Activated naive CD4-positive, alpha-beta T cell treated with anti-CD3 and anti-CD28 coated beads for 36 hours (primary cell): ENCODE measurements at regions of chr11 and their contacts with region 1.

Region 1: GRCh38 chr11:94786264-94787126 is 18.3 kb downstream of the AMOTL1 start:
- DNase-seq: no peak
- H3K4me3 Mint-ChIP-seq: no peak overlapping the region
- H3K27ac Mint-ChIP-seq: no peak overlapping the region
- H3K4me1 Mint-ChIP-seq: no peaks in the 10 kb centered on the region
- H3K27me3 Mint-ChIP-seq: no peaks in the 10 kb centered on the region

Region 2: DNA sequence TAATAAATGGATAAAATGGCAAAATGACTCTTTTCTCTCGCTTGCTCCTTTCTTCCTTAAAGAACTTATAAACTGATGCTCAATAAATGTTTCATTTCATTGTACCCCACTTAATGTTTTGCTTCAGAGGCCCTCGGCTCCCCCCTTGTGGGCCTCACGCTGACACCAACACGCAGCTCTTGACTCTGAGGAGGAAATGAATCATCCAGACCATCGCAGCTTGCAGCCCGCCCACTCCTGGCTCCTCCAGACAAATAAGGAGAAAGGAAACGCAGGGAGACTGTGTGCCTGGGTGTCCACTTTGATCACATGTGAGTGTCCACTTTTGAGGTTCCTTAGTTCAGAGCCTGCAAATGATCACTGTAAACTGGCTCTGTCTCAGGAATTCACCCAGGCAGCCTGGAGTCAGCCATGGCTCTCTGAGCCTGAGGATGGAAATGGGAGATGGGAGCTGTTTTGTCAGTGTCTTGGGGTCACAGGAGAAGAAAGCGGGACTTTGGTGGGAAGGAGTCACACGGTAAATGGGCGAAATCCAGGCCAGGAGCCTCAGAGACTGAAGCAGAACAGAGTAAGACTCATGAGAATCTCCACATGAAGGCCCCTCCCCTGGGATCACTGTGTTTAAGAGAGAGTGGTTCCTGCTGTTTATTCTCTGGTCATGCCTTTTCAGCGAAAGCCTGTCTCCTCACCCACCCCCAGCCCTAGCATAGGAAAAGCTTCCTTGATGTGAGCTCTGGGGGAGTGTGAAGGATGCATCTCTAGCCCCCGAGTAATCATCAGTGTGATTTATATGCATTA is 90.3 kb after region 1 on chr11:
- CTCF ChIA-PET with region 1: interaction called, 5 read pairs
- intact Hi-C with region 1: loop called (anchors 1 kb)
- DNase-seq: peak; percentile 86
- H3K4me3 Mint-ChIP-seq: no peak overlapping the region
- H3K27ac Mint-ChIP-seq: peak overlapping the region; percentile 59
- H3K4me1 Mint-ChIP-seq: peaks cover 23% of the 10 kb centered on the region
- H3K27me3 Mint-ChIP-seq: no peaks in the 10 kb centered on the region

Region 3: DNA sequence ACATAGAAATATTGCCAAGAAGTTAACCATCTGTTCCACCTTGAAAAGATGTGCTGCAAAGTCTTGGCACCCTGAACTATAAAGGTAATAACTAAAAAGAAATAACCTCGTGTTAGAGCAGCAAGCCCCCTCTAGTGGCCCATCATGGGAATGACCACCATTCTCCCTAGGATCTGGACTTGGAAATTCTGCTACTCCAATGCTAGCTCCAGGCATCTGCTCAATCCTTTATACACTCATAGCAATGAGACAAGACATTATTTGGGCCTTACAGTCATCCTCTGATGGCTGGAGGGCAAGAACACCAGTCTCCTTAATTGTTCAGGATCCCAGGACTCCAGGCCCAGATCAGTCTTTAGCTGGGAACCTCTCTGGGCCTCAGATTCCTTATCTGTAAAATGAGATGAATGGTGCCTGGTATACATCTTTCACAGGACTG is 110.9 kb after region 1 on chr11:
- CTCF ChIA-PET with region 1: interaction called, 30 read pairs
- intact Hi-C with region 1: loop called (anchors 1 kb)
- DNase-seq: peak; percentile 62
- H3K4me3 Mint-ChIP-seq: no peak overlapping the region
- H3K27ac Mint-ChIP-seq: no peak overlapping the region
- H3K4me1 Mint-ChIP-seq: no peaks in the 10 kb centered on the region
- H3K27me3 Mint-ChIP-seq: no peaks in the 10 kb centered on the region

Region 4: GRCh38 chr11:96324960-96325359 is 1538.5 kb after region 1 on chr11:
- CTCF ChIA-PET with region 1: no interaction called
- intact Hi-C with region 1: no loop called
- DNase-seq: no peak
- H3K4me3 Mint-ChIP-seq: no peak overlapping the region
- H3K27ac Mint-ChIP-seq: no peak overlapping the region
- H3K4me1 Mint-ChIP-seq: peaks cover 83% of the 10 kb centered on the region
- H3K27me3 Mint-ChIP-seq: no peaks in the 10 kb centered on the region